ENCODE measurements at regions of chrX and their contacts with region 1.

Region 1: DNA sequence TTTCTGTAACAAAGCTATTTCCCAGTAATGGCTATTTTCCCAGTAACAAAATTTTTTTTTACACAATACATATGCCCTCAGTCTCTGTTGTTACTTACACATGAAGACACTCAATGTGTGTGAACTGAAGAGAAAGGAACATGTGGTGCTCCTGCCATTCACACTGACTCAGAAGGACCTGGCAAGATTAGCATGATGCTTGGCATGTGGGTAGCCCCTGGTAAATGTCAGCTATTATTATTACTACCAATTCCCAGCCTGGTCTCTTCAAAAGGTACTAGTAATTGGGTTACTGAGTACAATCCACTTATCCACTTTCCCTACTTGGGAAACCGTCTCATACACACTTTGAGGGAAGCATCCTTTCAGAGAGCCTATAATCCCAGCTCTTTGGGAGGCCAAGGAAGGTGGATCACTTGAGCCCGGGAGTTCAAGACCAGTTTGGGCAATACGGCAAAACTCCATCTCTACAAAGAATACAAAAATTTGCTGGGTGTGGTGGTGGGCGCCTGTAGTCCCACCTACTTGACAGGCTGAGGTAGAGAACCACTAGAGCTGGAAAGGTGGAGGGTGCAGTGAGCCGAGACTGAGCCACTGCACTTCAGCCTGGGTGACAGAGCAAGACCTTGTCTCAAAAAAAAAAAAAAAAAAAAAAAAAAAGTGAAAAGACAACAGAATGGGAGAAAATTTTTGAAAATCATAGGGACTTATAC is 14.6 kb downstream of the RBBP7 start:
- DNase-seq: no peak
- ATAC-seq: no peak
- H3K4me3 ChIP-seq: no peak overlapping the region
- H3K4me3 Mint-ChIP-seq: no peak overlapping the region
- H3K27ac ChIP-seq: no peak overlapping the region
- H3K27ac Mint-ChIP-seq: no peak overlapping the region
- H3K4me1 ChIP-seq: no peaks in the 10 kb centered on the region
- H3K4me1 Mint-ChIP-seq: peaks cover 0 to 29% (median 20%) of the 10 kb centered on the region in 3 donors
- H3K27me3 ChIP-seq: no peaks in the 10 kb centered on the region
- H3K27me3 Mint-ChIP-seq: peaks cover 0 to 3% of the 10 kb centered on the region in 2 donors

Region 2: GRCh38 chrX:16822723-16823122 is 32.8 kb before region 1 on chrX:
- CTCF ChIA-PET with region 1: interaction called in 1 of 2 experiments, 4 read pairs
- POLR2A ChIA-PET with region 1: interaction called in 1 of 2 experiments, 10 read pairs
- DNase-seq: no peak
- ATAC-seq: no peak
- H3K4me3 ChIP-seq: no peak overlapping the region
- H3K4me3 Mint-ChIP-seq: no peak overlapping the region
- H3K27ac ChIP-seq: no peak overlapping the region
- H3K27ac Mint-ChIP-seq: no peak overlapping the region
- H3K4me1 ChIP-seq: no peaks in the 10 kb centered on the region
- H3K4me1 Mint-ChIP-seq: peaks cover 0 to 7% (median 6%) of the 10 kb centered on the region in 3 donors
- H3K27me3 ChIP-seq: no peaks in the 10 kb centered on the region
- H3K27me3 Mint-ChIP-seq: no peaks in the 10 kb centered on the region

Region 3: GRCh38 chrX:16839852-16840460 is 15.6 kb before region 1 on chrX:
- CTCF ChIA-PET with region 1: interaction called in 1 of 2 experiments, 3 read pairs
- POLR2A ChIA-PET with region 1: interaction called, 4 to 14 read pairs
- DNase-seq: no peak
- ATAC-seq: no peak
- H3K4me3 ChIP-seq: no peak overlapping the region
- H3K4me3 Mint-ChIP-seq: no peak overlapping the region
- H3K27ac ChIP-seq: no peak overlapping the region
- H3K27ac Mint-ChIP-seq: no peak overlapping the region
- H3K4me1 ChIP-seq: no peaks in the 10 kb centered on the region
- H3K4me1 Mint-ChIP-seq: peaks cover 0 to 6% (median 0%) of the 10 kb centered on the region in 3 donors
- H3K27me3 ChIP-seq: no peaks in the 10 kb centered on the region
- H3K27me3 Mint-ChIP-seq: no peaks in the 10 kb centered on the region

Region 4: GRCh38 chrX:16869393-16870094 is 14.0 kb after region 1 on chrX:
- CTCF ChIA-PET with region 1: no interaction called
- POLR2A ChIA-PET with region 1: interaction called, 4 to 11 read pairs
- DNase-seq: peak in 29 of 35 experiments; percentile 4 to 74 (median 37)
- ATAC-seq: peak; percentile 36 to 56 (median 54)
- H3K4me3 ChIP-seq: peak overlapping the region; percentile 62 to 89
- H3K4me3 Mint-ChIP-seq: peak overlapping the region; percentile 93 to 100 (median 94)
- H3K27ac ChIP-seq: peak overlapping the region; percentile 98
- H3K27ac Mint-ChIP-seq: peak overlapping the region; percentile 95 to 97
- H3K4me1 ChIP-seq: peaks cover 14 to 23% of the 10 kb centered on the region in 2 experiments
- H3K4me1 Mint-ChIP-seq: peaks cover 31 to 45% (median 42%) of the 10 kb centered on the region in 3 donors
- H3K27me3 ChIP-seq: no peaks in the 10 kb centered on the region
- H3K27me3 Mint-ChIP-seq: peaks cover 0 to 7% of the 10 kb centered on the region in 2 donors